ENCODE measurements at regions of chr2 and their contacts with region 1.

Region 1: GRCh38 chr2:64548761-64549160 is 24.6 kb downstream of the AFTPH start:
- DNase-seq: no peak
- H3K4me3 ChIP-seq: no peak overlapping the region
- H3K27ac ChIP-seq: no peak overlapping the region
- H3K27me3 ChIP-seq: no peaks in the 10 kb centered on the region
- CTCF ChIP-seq: no peak

Region 2: GRCh38 chr2:64404002-64404731 is 144.6 kb before region 1 on chr2:
- CTCF ChIA-PET with region 1: no interaction called
- POLR2A ChIA-PET with region 1: no interaction called
- DNase-seq: no peak
- H3K4me3 ChIP-seq: no peak overlapping the region
- H3K27ac ChIP-seq: no peak overlapping the region
- H3K27me3 ChIP-seq: peaks cover 14% of the 10 kb centered on the region
- CTCF ChIP-seq: no peak

Region 3: DNA sequence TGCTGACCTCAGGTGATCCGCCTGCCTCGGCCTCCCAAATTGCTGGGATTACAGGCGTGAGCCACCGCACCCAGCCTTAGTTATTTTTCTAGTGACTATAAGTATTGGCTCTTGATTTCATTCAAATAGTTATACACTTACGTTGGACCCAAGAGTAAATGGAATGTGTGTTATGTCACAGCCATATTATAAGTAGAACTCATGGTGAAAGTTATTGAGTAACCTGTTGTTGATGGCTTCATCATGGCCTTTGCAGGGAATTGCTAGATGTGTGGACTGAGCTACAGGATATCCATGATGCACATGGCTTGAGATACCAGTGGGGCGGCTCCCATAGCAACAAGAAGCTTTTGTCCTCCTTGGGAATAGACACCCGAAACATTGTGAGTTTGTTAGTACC is 20.1 kb after region 1 on chr2:
- CTCF ChIA-PET with region 1: no interaction called
- POLR2A ChIA-PET with region 1: no interaction called
- DNase-seq: no peak
- H3K4me3 ChIP-seq: no peak overlapping the region
- H3K27ac ChIP-seq: no peak overlapping the region
- H3K27me3 ChIP-seq: no peaks in the 10 kb centered on the region
- CTCF ChIP-seq: no peak

Region 4: DNA sequence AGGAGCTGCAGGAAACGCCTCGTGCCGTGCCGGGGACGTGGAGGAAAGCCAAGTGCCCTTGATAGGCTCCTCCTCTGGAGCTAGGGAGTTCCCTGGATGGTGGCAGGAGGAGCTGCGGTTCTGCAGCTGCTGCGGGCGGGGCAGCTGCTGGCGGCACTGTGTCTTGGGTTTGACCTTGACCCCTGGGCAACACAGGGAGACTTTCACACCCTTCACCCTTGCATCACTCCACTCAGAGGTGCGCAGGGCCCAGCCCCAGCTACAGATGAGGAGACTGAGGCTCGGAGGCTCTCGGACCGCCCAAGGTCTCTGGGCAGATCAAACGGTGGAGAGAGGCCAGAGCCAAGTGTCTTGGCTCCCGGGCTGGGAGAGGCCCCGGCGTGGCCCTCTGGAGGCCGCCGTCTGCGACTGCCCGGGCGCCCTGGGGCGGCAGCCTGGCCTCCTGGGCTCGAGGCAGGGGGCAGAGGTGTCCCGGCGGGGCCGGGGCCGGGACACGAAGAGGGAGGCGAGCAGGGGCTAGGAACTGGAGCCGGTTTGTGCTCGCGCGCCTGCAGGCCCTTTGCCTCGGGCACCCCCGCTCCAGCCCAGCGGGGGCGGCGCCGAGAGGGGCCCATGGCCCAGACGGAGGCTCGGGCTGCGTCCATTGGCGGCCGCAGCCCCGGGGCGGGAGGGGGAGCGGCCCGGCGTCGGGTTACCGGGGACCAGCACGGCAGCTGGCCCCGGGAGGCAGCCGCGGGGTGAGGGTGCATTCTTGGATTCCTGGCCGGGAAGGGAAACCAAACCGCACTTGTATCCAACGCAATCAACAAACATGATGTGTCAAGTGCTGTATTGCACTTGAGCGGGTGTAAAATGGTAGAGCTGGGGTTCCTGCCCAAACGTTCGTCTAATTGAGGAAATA is 310.8 kb after region 1 on chr2:
- CTCF ChIA-PET with region 1: interaction called, 10 read pairs
- POLR2A ChIA-PET with region 1: no interaction called
- DNase-seq: peak; percentile 78
- H3K4me3 ChIP-seq: peak overlapping the region; percentile 44
- H3K27ac ChIP-seq: peak overlapping the region; percentile 92
- H3K27me3 ChIP-seq: peaks cover 5% of the 10 kb centered on the region
- CTCF ChIP-seq: no peak